T-cell (primary cell): ENCODE measurements at regions of chr20 and their contacts with region 1.

Region 1: GRCh38 chr20:50594231-50594590 is 84.0 kb downstream of the PTPN1 start:
- DNase-seq: no peak
- ATAC-seq: peak in 1 of 4 experiments; percentile 3
- H3K4me3 ChIP-seq: no peak overlapping the region
- H3K4me3 Mint-ChIP-seq: no peak overlapping the region
- H3K27ac ChIP-seq: no peak overlapping the region
- H3K27ac Mint-ChIP-seq: no peak overlapping the region
- H3K4me1 ChIP-seq: peaks cover 0 to 4% of the 10 kb centered on the region in 2 experiments
- H3K4me1 Mint-ChIP-seq: peaks cover 0 to 5% (median 3%) of the 10 kb centered on the region in 3 donors
- H3K27me3 ChIP-seq: peaks cover 0 to 3% of the 10 kb centered on the region in 2 experiments
- H3K27me3 Mint-ChIP-seq: no peaks in the 10 kb centered on the region

Region 2: DNA sequence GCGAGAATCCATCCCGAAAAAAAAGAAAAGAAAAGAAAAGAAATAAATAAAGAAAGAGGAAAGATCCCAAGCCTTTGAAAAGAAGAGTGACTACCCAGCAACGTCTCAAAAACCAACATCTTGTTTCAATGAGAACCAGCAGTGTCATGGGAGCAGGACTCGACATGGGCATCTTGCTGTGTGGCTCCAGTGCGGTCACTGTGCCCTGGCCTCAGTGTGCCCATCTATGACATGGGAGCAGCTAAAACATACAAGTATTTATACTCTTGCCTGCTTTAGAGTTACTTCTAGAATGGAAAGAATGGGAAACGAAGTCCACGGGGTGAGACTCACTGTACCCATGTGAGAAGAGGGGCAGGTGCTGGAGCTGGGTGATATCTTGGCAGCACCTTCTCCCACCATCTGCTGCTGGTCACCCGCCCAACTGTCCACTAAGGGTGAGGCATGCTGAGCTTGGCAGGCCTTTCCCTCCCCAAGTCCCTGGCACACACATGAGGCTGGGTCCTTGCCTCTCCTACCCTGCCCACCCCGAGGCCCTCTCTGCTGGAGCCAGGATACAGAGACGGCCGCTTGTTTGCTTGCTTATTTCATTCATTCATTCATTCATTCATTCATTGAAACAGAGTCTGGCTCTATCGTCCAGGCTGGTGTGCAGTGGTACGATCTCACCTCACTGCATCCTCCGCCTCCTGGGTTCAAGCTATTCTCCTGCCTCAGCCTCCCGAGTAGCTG is 19.4 kb after region 1 on chr20:
- CTCF ChIA-PET with region 1: no interaction called
- POLR2A ChIA-PET with region 1: interaction called in 1 of 2 experiments, 14 read pairs
- DNase-seq: no peak
- ATAC-seq: no peak
- H3K4me3 ChIP-seq: no peak overlapping the region
- H3K4me3 Mint-ChIP-seq: no peak overlapping the region
- H3K27ac ChIP-seq: no peak overlapping the region
- H3K27ac Mint-ChIP-seq: no peak overlapping the region
- H3K4me1 ChIP-seq: no peaks in the 10 kb centered on the region
- H3K4me1 Mint-ChIP-seq: no peaks in the 10 kb centered on the region
- H3K27me3 ChIP-seq: peaks cover 0 to 19% of the 10 kb centered on the region in 2 experiments
- H3K27me3 Mint-ChIP-seq: peaks cover 0 to 3% of the 10 kb centered on the region in 2 donors

Region 3: DNA sequence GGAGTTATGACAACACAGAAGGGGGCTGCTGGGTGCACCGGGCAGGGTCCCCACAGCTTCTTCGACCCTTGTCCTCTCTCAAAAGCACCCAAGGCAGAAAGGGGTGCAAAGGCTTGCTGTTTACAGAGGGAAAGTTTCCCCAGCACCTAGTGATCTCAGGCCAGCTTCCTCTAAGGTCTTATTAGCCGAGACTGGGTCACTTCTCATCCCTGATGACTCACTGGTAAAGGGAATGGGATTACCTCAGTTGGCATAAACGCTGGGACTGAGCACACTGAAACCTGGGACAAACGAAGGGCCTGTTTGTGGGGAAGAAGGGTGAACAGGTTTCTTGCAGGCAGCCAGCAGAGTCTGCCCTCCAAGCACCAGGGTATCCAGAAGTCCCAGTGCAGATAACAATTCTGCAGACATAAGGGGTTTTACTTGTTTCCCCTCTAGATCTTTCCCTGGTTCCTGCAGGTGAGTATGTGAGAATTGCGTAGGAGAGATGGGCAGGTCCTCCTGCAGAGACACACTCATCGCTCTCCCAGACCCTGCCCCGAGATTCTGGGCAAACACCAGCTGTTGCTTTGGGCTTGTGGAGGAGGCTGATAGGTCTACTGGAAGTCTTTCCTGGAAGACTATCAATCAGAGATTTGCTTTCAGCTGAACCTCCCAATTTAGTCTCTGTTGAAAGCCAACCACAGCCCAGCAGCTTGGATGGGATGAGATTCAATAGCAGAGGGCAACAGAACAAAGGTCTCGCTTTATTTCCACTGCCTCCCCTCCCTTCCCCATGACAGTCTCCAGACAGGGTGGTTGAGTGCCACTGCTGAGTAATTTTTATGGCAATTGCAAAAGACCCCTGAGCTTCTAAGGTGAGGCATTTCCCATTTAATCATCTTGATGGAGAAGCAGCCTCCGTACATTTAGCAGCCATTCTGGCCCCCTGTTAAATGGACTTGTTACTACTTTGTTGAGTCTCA is 403.0 kb after region 1 on chr20:
- CTCF ChIA-PET with region 1: no interaction called
- POLR2A ChIA-PET with region 1: no interaction called
- DNase-seq: no peak
- ATAC-seq: no peak
- H3K4me3 ChIP-seq: no peak overlapping the region
- H3K4me3 Mint-ChIP-seq: no peak overlapping the region
- H3K27ac ChIP-seq: no peak overlapping the region
- H3K27ac Mint-ChIP-seq: no peak overlapping the region
- H3K4me1 ChIP-seq: no peaks in the 10 kb centered on the region
- H3K4me1 Mint-ChIP-seq: no peaks in the 10 kb centered on the region
- H3K27me3 ChIP-seq: peaks cover 3 to 52% of the 10 kb centered on the region in 2 experiments
- H3K27me3 Mint-ChIP-seq: peaks cover 22 to 33% of the 10 kb centered on the region in 2 donors